Activated T-helper 1 cell treated with anti-CD3 and anti-CD28 coated beads, Interleukin-12 subunit alpha, Interleukin-12 subunit beta, Interleukin-2, Interleukin-4 antibody, amounts not matched to agents 30 ng/mL and 10 ng/mL and 1 ng/mL, durations not matched to agents 14 hours and 24 hours and 36 hours (primary cell): ENCODE measurements at regions of chr18 and their contacts with region 1.

Region 1: DNA sequence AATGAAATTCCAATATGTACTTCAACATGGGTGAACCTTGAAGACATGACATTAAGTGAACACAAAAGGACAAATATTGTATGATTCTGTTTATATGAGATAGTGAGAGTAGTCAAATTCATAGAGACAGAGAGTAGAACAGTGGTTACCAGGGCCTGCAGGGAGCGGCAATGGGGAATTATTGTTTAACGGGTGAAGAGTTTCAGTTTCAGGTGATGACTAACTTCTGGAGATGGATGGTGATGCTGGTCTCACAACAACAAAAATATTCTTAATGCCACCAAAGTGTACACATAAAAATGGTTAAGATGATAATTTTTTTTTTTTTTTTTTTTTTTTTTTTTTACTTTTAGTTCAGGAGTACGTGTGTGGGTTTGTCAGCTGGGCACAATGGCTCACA is 109.4 kb upstream of the TMEM200C start:
- DNase-seq: peak; percentile 11
- H3K4me3 Mint-ChIP-seq: peak overlapping the region; percentile 17
- H3K27ac Mint-ChIP-seq: peak overlapping the region; percentile 85
- H3K4me1 Mint-ChIP-seq: peaks cover 21% of the 10 kb centered on the region
- H3K27me3 Mint-ChIP-seq: peaks cover 13% of the 10 kb centered on the region

Region 2: DNA sequence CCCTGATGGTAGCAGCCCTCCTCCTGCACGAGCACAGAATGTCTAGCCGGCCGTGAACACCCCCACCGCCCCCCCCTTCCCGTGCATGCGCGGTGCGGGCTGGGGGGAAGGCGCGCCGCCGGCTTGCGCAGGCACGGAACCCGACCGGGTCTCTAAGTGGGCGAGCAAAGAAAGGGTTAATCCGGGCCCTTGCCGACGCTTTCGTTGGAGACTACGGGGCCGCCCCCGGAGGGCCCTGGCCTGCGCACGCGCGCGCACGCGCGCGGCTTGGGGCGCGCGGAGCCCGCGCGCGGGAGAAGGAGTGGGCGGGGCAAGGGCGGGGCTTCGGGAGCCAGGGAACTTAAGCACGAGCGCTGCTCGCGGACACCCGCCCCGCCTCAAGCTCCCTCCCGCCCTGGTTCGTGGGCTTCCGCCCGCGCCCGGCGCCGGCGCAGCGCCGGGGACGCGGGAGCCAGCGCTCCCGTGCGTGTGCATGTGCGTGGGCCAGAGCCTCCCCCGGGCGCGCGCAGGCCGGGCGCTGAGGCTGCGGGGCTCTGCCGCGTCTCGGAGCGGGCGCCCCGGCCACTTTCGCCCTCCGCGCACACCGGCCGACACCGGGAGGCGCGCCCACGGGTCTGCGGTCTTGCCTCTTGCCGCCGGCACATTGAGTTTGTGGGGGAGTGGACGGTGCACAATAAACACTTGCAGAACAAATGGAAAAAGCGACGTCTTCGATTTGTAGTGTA is 708.5 kb before region 1 on chr18:
- intact Hi-C with region 1: loop called (anchors 1 kb)
- DNase-seq: peak; percentile 91
- H3K4me3 Mint-ChIP-seq: peak overlapping the region; percentile 94
- H3K27ac Mint-ChIP-seq: peak overlapping the region; percentile 98
- H3K4me1 Mint-ChIP-seq: peaks cover 34% of the 10 kb centered on the region
- H3K27me3 Mint-ChIP-seq: peaks cover 16% of the 10 kb centered on the region

Region 3: DNA sequence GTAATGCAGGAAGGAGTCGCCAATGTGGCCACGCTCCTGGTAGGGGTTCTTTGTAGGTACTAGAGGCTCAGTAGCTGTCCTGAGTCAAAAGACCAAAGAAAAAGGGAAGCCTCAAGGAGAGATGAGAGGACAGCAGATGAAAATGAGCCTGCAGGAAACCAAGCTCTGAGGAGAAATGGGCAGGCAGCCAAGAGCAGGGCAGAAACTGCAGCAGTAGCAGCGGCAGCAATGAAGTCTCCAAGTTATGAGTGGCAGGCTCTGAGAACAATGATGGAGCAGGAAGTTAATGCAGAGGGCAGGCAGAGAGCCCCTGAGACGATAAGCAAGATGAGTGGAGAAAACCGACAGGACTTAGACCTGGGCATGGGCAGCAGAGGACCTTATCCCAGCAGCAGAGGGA is 61.2 kb before region 1 on chr18:
- intact Hi-C with region 1: loop called (anchors 10 kb)
- DNase-seq: no peak
- H3K4me3 Mint-ChIP-seq: no peak overlapping the region
- H3K27ac Mint-ChIP-seq: no peak overlapping the region
- H3K4me1 Mint-ChIP-seq: no peaks in the 10 kb centered on the region
- H3K27me3 Mint-ChIP-seq: peaks cover 6% of the 10 kb centered on the region

Region 4: GRCh38 chr18:5975111-5976002 is 29.3 kb before region 1 on chr18:
- intact Hi-C with region 1: loop called (anchors 1 kb)
- DNase-seq: no peak
- H3K4me3 Mint-ChIP-seq: no peak overlapping the region
- H3K27ac Mint-ChIP-seq: no peak overlapping the region
- H3K4me1 Mint-ChIP-seq: peaks cover 9% of the 10 kb centered on the region
- H3K27me3 Mint-ChIP-seq: peaks cover 10% of the 10 kb centered on the region

Region 5: DNA sequence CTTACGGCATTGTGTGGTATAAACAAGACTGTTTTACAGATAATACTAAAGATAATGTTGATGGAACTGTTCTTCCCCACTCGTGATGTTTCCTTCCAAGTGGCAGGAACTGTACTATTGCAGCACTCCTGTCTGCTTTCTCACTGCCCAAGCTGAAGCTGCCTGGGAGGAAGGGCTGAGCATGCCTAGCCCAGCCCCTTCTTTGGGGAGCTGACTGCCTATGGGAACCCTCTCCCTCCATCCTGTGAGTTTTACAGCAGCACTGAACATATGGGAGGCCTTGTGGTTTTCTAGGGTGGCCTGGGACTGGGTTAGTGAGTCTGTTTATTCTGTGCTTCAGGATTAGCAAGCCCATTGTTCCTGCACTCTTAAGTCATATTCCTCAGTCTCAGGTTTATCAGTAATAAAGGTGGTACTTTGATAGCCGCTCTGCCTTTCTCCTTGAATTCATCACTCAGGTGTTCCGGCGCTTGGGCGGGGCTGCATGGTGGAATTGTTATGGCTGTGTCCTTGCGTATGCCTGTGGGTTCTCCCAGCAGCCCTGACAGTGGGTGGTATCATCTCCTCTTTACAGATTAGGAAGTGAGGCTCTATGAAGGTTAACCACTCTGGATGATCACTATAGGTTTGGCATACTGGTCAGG is 1942.2 kb after region 1 on chr18:
- intact Hi-C with region 1: loop called (anchors 10 kb)
- DNase-seq: peak; percentile 7
- H3K4me3 Mint-ChIP-seq: peak overlapping the region; percentile 85
- H3K27ac Mint-ChIP-seq: peak overlapping the region; percentile 57
- H3K4me1 Mint-ChIP-seq: peaks cover 12% of the 10 kb centered on the region
- H3K27me3 Mint-ChIP-seq: no peaks in the 10 kb centered on the region